ENCODE measurements at regions of chr1 and their contacts with region 1.

Region 1: GRCh38 chr1:205061665-205062069 is 18.7 kb downstream of the CNTN2 start:
- DNase-seq: peak; percentile 87
- H3K4me3 ChIP-seq: no peak overlapping the region
- H3K27ac ChIP-seq: no peak overlapping the region
- H3K4me1 ChIP-seq: no peaks in the 10 kb centered on the region
- H3K27me3 ChIP-seq: no peaks in the 10 kb centered on the region
- CTCF ChIP-seq: peak; percentile 96

Region 2: DNA sequence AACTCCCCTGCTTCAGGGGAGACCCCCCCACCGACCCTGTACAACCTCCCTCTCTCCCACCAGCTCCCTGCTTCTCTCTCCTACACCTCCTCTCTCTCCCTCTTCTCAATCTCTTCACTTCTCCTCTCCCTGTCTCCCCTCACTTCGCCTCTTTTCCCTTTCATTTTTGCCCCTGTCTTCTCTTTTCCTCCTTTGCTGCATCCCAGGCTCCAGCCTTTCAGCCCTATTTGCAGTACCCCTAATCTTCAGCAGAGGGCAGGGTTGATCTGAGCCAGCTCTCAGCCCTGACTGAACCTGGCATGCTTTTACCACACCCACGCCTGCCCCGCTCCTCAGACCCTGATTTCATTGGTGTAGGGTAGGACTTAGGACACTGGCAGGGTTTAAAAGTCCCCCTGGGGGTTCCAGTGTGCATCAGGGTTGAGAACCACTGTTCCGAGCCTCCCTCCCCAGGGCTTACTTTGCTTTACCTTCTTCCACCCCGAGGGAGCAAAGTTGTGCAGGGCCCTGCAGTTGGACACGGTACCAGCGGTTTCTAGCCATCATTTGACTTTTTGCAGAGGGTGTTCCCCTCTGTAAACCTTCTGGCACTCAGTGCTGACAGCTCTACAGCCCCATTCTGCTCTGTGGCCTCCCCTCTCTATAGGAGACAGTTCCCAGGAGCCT is 86.0 kb before region 1 on chr1:
- CTCF ChIA-PET with region 1: interaction called, 28 read pairs
- POLR2A ChIA-PET with region 1: no interaction called
- intact Hi-C with region 1: no loop called
- DNase-seq: peak; percentile 70
- H3K4me3 ChIP-seq: no peak overlapping the region
- H3K27ac ChIP-seq: no peak overlapping the region
- H3K4me1 ChIP-seq: no peaks in the 10 kb centered on the region
- H3K27me3 ChIP-seq: peaks cover 6% of the 10 kb centered on the region
- CTCF ChIP-seq: peak; percentile 86